ENCODE measurements at regions of chr13 and their contacts with region 1.

Region 1: GRCh38 chr13:42377640-42378382 is 105.9 kb downstream of the AKAP11 start:
- DNase-seq: peak; percentile 91
- H3K4me3 Mint-ChIP-seq: peak overlapping the region; percentile 51
- H3K27ac Mint-ChIP-seq: peak overlapping the region; percentile 96
- H3K4me1 Mint-ChIP-seq: peaks cover 71% of the 10 kb centered on the region
- H3K27me3 Mint-ChIP-seq: no peaks in the 10 kb centered on the region

Region 2: GRCh38 chr13:42333613-42334328 is 44.0 kb before region 1 on chr13:
- intact Hi-C with region 1: loop called (anchors 1 kb)
- DNase-seq: peak; percentile 66
- H3K4me3 Mint-ChIP-seq: no peak overlapping the region
- H3K27ac Mint-ChIP-seq: peak overlapping the region; percentile 76
- H3K4me1 Mint-ChIP-seq: peaks cover 35% of the 10 kb centered on the region
- H3K27me3 Mint-ChIP-seq: no peaks in the 10 kb centered on the region

Region 3: DNA sequence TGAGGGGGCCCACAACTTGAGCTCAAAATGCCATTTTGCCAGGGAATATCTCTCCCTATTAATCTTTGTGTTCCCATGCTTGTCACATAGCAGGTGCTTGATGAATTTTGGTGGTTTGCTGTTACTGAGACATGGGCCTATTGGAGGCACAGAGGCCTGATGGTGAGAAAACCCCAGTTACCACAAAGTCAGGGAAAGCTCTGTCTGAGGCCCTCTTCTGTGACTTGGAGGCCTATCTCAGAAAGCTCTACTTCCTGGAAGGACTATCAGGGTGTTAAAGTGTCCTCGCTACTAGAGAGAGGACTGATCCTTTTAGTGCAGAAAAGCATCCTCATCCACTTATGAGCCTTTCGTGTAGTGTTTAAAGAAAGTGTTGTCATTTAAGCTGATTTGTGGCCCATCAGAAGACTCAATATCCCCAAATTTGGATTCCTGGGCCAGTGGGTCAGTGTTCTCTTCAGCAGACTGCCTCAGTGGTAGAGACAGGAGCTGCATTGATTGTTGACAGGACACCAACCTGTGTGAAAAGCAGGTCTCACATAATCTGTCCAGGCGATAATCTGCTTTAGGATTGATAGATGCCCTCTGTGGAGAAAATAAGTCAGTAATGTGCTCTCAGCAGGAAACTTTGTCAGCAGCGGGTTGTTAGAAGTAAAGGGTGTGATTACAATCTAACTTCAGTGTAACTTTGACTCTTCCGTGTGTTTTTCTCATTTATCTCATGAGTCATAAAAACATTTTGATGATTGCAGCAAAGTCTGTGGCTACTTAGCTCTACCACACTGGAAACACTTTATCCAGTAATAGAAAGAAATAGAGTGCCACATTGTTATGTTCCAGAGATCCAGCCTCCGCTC is 15.1 kb after region 1 on chr13:
- intact Hi-C with region 1: loop called (anchors 1 kb)
- DNase-seq: peak; percentile 86
- H3K4me3 Mint-ChIP-seq: peak overlapping the region; percentile 91
- H3K27ac Mint-ChIP-seq: peak overlapping the region; percentile 97
- H3K4me1 Mint-ChIP-seq: peaks cover 76% of the 10 kb centered on the region
- H3K27me3 Mint-ChIP-seq: no peaks in the 10 kb centered on the region

Region 4: GRCh38 chr13:42420304-42420703 is 42.5 kb after region 1 on chr13:
- intact Hi-C with region 1: loop called (anchors 1 kb)
- DNase-seq: peak; percentile 71
- H3K4me3 Mint-ChIP-seq: peak overlapping the region; percentile 10
- H3K27ac Mint-ChIP-seq: peak overlapping the region; percentile 66
- H3K4me1 Mint-ChIP-seq: peaks cover 39% of the 10 kb centered on the region
- H3K27me3 Mint-ChIP-seq: no peaks in the 10 kb centered on the region